Activated CD8-positive, alpha-beta T cell treated with anti-CD3 and anti-CD28 coated beads, Interleukin-2, amount 10 ng/mL, durations not matched to agents 7 days and 5 days (primary cell): ENCODE measurements at regions of chr7 and their contacts with region 1.

Region 1: DNA sequence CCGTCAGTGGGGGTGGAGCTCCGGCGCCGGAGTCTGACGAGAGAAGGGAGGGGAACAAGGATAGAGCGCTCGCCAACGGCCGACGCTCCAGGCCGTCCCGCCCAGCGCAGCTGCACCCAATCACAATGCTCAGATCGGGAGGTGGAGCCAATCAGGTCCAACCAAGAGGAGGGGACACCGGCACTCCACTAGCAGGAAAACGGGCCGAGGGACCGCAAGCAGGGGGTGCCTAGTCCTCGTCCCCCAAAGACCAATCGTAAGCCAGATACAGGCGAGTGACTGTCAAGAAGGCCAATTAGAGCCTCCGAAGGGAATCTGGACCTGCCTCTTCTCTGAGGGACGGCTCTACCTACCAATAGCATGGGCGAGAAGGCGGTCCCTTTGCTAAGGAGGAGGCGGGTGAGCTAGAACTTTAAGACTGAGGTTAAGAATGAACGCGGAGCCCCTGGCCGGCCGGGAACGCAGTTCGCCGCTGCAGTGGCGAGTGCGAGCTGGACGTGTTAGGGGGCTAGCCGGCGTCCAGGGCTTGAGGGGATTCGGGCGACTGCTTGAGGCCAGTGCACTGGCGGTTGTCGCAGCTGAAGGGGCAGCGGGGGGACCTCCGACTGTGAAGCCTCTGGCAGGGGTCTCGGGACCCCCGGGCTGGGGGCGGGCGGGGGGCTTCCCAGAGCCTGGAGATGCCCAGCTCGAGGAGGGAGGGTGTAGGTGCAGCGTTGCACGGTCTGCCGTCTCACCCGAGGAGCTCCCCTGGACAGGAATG is at the start of gene FBXO24:
- DNase-seq: peak; percentile 100
- ATAC-seq: peak; percentile 87
- H3K4me3 Mint-ChIP-seq: peak within 1 kb of the TSS; percentile 93
- H3K27ac Mint-ChIP-seq: peak within 1 kb of the TSS; percentile 98
- H3K4me1 Mint-ChIP-seq: peaks cover 26% of the 10 kb centered on the region
- H3K27me3 Mint-ChIP-seq: peaks cover 10% of the 10 kb centered on the region
- total RNA-seq, gene FBXO24: 0.37 to 0.45 TPM

Region 2: GRCh38 chr7:100428199-100428966 is 158.1 kb before region 1 on chr7 and contains the start of gene ZCWPW1:
- CTCF ChIA-PET with region 1: no interaction called
- POLR2A ChIA-PET with region 1: interaction called, 17 read pairs
- DNase-seq: peak; percentile 97
- ATAC-seq: peak; percentile 68
- H3K4me3 Mint-ChIP-seq: peak within 1 kb of the TSS; percentile 98
- H3K27ac Mint-ChIP-seq: peak within 1 kb of the TSS; percentile 100
- H3K4me1 Mint-ChIP-seq: peaks cover 36% of the 10 kb centered on the region
- H3K27me3 Mint-ChIP-seq: peaks cover 6% of the 10 kb centered on the region
- total RNA-seq, gene ZCWPW1: 2.6 to 2.8 TPM

Region 3: DNA sequence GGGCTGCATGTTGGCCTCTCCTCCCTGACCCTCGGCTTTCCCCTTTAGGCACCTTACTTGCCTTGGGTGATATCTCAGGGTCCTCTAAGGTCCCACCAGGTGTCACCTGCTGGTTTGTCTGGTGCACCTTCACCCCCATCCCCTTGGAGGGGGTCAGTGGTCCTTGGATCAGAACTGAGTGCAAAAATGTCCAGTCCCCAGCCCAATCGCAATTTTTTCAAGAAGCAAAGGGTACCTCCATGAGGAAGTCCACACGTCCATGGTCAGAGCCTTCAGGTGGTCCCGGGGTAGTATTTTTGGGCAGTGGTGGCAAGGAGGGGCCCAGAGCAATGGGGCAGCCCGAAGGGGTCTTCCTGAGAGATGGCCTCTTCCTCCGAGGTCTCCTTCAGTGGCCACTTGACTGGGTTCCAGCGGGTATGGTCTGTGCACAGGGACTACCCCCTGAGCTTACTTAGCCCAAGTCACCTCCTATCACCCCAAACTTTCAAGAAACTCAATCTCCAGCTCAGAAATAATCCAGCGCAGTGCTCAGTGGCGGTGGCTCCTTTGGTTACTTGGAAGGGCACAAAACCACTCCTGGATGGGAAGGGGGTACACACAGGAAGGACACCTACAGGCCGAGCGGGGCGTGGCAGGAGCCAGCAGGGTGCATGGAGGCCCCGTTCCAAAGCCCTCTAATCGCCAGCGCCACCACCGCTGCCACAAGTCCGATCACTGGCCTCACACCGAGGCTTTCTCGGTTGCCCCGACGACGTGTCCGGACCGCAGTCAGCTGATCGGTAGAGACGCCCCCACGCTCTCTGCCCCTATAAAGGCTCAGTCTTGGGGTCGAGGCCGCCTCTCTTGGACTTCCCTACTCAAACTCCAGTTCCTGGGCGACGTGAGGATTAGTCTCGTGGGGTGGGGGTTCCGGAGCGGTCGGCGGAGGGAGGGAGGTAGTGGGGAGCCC is 17.3 kb before region 1 on chr7:
- CTCF ChIA-PET with region 1: interaction called, 57 read pairs
- POLR2A ChIA-PET with region 1: interaction called, 11 read pairs
- DNase-seq: peak; percentile 61
- ATAC-seq: peak; percentile 35
- H3K4me3 Mint-ChIP-seq: peak overlapping the region; percentile 40
- H3K27ac Mint-ChIP-seq: peak overlapping the region; percentile 77
- H3K4me1 Mint-ChIP-seq: peaks cover 58% of the 10 kb centered on the region
- H3K27me3 Mint-ChIP-seq: no peaks in the 10 kb centered on the region

Region 4: GRCh38 chr7:100604028-100604975 is 17.9 kb after region 1 on chr7:
- CTCF ChIA-PET with region 1: interaction called, 16 read pairs
- POLR2A ChIA-PET with region 1: interaction called, 18 read pairs
- DNase-seq: peak; percentile 90
- ATAC-seq: peak; percentile 79
- H3K4me3 Mint-ChIP-seq: peak overlapping the region; percentile 89
- H3K27ac Mint-ChIP-seq: peak overlapping the region; percentile 97
- H3K4me1 Mint-ChIP-seq: peaks cover 50% of the 10 kb centered on the region
- H3K27me3 Mint-ChIP-seq: peaks cover 6% of the 10 kb centered on the region

Region 5: GRCh38 chr7:100611974-100612729 is 25.7 kb after region 1 on chr7 and contains the start of gene MOSPD3:
- CTCF ChIA-PET with region 1: interaction called, 10 read pairs
- POLR2A ChIA-PET with region 1: interaction called, 10 read pairs
- DNase-seq: peak; percentile 98
- ATAC-seq: peak; percentile 94
- H3K4me3 Mint-ChIP-seq: peak within 1 kb of the TSS; percentile 95
- H3K27ac Mint-ChIP-seq: peak within 1 kb of the TSS; percentile 99
- H3K4me1 Mint-ChIP-seq: peaks cover 30% of the 10 kb centered on the region
- H3K27me3 Mint-ChIP-seq: peaks cover 6% of the 10 kb centered on the region
- total RNA-seq, gene MOSPD3: 42.1 to 43.5 TPM